CD8-positive, alpha-beta T cell (primary cell): ENCODE measurements at regions of chr20 and their contacts with region 1.

Region 1: DNA sequence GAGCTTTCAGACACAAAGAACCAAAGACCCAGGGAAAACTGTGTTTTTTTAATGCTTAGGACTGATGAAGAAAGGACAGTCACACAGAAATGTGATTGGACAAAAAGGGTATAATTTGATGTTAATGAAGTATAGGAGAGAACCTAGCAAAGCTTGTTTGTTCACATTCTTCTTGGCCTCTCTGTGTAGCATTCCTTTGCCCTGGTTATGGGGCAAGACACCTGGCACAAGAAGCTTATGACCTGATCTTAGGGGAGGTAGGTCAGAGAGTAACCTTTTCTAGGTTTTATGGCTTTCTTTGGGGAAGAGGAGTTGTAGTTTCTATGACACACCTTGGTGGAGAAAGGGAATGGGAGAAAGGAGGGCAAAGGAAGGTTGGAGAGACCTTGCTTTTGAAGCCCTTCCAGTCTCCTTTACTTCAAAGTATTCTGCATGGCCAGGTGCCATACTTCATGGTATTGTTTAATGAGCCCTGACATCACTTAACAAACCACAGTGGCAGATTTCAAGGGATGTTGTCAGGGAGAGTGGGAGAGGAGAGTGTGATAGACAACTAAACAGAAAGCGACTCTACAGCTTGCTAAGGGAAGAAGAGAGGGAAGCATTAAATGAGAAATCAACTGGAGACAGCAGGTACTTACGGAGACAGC is 701.8 kb upstream of the FLRT3 start:
- DNase-seq: no peak
- ATAC-seq: no peak
- H3K4me3 ChIP-seq: no peak overlapping the region
- H3K4me3 Mint-ChIP-seq: no peak overlapping the region
- H3K27ac ChIP-seq: no peak overlapping the region
- H3K27ac Mint-ChIP-seq: no peak overlapping the region
- H3K4me1 ChIP-seq: no peaks in the 10 kb centered on the region
- H3K4me1 Mint-ChIP-seq: no peaks in the 10 kb centered on the region
- H3K27me3 ChIP-seq: no peaks in the 10 kb centered on the region
- H3K27me3 Mint-ChIP-seq: no peaks in the 10 kb centered on the region
- CTCF ChIP-seq: no peak

Region 2: DNA sequence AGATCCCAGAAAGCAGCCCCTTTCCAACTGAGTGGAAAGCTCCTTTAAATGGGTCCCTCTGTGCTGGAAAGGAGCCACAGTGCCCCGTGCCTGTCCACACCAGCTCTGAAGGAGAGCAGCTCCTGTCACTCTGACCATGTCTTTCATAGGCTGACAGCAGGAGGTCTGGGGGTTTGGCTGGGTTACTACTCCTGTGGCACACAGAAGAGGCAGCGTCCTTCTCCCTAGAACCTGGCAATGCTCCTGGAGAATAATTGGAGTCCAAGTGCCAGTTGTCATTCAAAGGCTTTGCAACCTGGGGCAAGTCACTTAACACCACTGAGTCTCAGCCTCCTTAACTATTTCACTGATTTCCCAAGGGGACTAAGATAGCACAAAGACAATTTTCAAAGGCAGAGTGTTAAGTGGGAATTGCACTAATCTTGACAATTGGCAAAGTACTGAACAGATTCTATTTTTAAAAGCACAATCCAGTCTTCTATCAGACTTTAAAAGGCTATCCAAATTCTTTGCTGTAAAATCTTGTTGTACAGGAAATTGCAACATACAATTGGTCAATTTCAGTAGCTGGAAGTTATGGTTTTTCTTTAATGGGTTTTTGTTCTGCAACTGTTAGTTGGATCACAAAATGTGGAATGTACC is 1076.8 kb after region 1 on chr20:
- CTCF ChIA-PET with region 1: no interaction called
- POLR2A ChIA-PET with region 1: no interaction called
- intact Hi-C with region 1: loop called in 1 of 2 experiments (anchors 5 kb)
- DNase-seq: no peak
- ATAC-seq: no peak
- H3K4me3 ChIP-seq: no peak overlapping the region
- H3K4me3 Mint-ChIP-seq: no peak overlapping the region
- H3K27ac ChIP-seq: no peak overlapping the region
- H3K27ac Mint-ChIP-seq: no peak overlapping the region
- H3K4me1 ChIP-seq: no peaks in the 10 kb centered on the region
- H3K4me1 Mint-ChIP-seq: no peaks in the 10 kb centered on the region
- H3K27me3 ChIP-seq: no peaks in the 10 kb centered on the region
- H3K27me3 Mint-ChIP-seq: no peaks in the 10 kb centered on the region
- CTCF ChIP-seq: no peak